Naive thymus-derived CD4-positive, alpha-beta T cell (primary cell): ENCODE measurements at regions of chr17 and their contacts with region 1.

Region 1: DNA sequence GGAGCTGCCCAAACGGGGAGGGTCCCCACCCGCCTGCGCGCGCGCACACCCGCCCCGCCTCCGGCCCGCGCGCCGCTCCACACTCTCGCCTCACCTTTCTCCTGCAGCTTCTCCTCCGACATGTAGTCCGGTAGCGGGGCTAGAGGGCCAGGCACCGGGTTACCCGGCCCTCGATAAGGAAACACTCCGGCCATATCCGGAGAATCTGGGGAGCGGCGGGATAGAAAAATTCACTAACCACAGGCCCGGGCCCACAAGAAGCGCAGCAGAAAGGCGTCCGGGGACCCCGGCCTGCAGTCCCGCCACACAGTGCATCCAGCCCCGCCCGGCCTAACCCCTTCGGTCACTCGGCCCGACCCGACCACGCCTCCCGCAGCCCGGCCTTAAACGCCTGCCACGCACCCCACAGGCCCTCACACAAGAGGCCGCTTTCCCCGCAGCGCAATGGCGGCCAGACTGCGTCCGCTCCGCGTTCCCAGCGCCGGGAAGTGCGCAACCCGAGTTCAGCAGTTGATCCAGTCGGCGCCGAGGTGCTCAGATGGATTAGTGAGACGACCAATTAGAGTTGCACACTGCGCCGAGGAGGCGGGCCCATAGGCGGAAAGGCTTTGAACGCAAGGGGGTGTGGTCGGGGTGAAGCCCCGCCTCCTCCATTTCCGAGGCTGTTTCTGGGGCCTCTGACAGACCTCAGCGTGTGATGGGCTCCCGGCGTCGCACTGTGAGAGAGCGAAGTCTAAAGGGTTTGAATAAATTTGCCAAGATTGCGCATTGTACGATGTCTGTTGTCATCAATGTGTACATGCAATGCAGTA is at the start of gene PRPF8:
- DNase-seq: peak; percentile 89 to 99 (median 99)
- ATAC-seq: peak; percentile 99
- H3K4me3 ChIP-seq: peak within 1 kb of the TSS; percentile 96
- H3K4me3 Mint-ChIP-seq: peak within 1 kb of the TSS; percentile 89 to 100 (median 97)
- H3K27ac ChIP-seq: peak within 1 kb of the TSS; percentile 100
- H3K27ac Mint-ChIP-seq: peak within 1 kb of the TSS; percentile 95 to 100 (median 98)
- H3K4me1 ChIP-seq: peaks cover 10 to 24% of the 10 kb centered on the region in 2 donors
- H3K4me1 Mint-ChIP-seq: peaks cover 32 to 59% (median 48%) of the 10 kb centered on the region in 7 donors
- H3K27me3 ChIP-seq: no peaks in the 10 kb centered on the region
- H3K27me3 Mint-ChIP-seq: no peaks in the 10 kb centered on the region
- total RNA-seq, gene PRPF8: 388 to 554 (median 460) TPM

Region 2: DNA sequence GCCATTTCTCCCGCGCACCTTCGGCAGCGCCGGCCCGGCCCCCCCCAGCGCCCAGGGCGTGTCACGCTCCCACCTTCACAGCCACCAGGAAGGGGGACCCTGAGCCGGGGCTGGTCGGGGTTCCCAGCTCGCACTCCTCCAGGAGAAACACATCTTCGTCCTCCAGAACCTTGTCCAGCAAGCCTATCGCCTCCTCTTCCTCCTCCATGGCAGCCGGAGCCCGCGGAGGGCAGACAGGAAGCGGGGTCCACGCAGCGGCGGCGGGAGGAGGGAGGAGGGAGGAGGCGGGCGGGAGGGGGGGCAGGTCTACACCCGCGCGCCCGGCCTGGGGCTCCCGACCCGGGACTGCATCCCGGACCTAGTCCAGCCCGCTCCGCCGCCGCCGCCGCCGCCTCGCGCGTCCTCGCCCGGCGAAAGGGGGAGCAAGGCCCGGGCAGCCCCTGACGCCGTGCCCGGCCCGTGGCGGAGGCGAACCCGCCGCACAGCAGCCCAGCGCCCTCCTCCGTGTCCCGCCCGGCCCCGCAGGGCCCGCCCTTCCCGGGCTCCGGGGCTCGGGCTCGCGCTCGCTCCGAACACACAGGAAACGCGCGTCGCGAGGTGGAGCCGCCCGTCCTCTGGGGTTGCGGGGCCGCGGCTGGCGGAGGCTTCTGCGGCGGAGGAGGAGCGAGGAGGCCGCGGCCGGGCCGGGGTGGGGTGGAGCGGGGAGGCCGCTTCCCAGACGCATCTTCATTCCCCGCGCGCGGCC is 575.6 kb before region 1 on chr17:
- CTCF ChIA-PET with region 1: no interaction called
- POLR2A ChIA-PET with region 1: no interaction called
- intact Hi-C with region 1: loop called in 1 of 2 experiments (anchors 5 kb)
- DNase-seq: peak; percentile 62 to 79 (median 76)
- ATAC-seq: peak; percentile 85
- H3K4me3 ChIP-seq: peak overlapping the region; percentile 71
- H3K4me3 Mint-ChIP-seq: peak overlapping the region; percentile 78 to 92 (median 86)
- H3K27ac ChIP-seq: peak overlapping the region; percentile 71
- H3K27ac Mint-ChIP-seq: peak overlapping the region in 8 of 9 donors; percentile 51 to 92 (median 86)
- H3K4me1 ChIP-seq: peaks cover 9 to 22% of the 10 kb centered on the region in 2 donors
- H3K4me1 Mint-ChIP-seq: peaks cover 16 to 47% (median 35%) of the 10 kb centered on the region in 7 donors
- H3K27me3 ChIP-seq: no peaks in the 10 kb centered on the region
- H3K27me3 Mint-ChIP-seq: no peaks in the 10 kb centered on the region

Region 3: DNA sequence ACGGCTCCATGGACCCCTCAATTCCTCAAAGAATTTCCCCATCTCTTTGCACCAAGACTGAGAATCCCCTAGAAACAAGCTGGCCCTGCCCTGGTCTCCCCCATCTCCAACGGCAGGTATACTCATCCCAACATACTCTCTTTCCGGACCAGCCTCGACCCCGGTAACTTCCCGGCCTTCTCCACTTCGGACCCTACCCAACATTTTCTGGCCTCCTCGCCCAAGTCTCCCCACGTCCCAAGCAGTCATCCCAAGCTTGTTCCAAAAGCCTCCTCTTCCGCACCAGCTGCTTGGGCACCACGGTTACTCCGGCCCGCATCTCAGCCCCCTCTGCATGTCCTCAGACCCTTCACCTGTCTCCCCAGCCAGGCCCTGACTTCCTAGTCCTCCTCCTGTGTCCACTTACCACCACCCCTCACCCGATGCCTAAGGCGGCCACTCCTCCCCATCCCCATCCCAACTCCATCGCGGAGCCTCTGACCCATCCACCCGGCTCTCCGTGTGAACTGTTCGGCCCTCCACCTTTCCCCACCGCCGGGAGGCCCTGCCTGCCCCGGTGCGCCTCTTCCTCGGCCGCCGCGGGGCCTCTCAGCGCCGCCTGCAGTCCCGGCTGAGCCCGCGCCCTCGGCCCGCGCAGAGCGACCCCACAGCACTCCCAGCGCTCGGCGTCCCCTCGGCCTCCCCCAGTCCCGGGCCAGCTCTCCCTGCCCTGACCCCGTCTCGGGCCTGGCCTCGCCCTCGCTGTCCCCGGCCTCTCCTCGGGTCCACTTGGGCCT is 123.0 kb before region 1 on chr17:
- CTCF ChIA-PET with region 1: no interaction called
- POLR2A ChIA-PET with region 1: interaction called, 4 read pairs
- intact Hi-C with region 1: loop called in 1 of 2 experiments (anchors 1 kb)
- DNase-seq: peak in 8 of 9 donors; percentile 28 to 58 (median 36)
- ATAC-seq: peak; percentile 37
- H3K4me3 ChIP-seq: peak overlapping the region; percentile 39
- H3K4me3 Mint-ChIP-seq: peak overlapping the region; percentile 73 to 89 (median 82)
- H3K27ac ChIP-seq: peak overlapping the region; percentile 76
- H3K27ac Mint-ChIP-seq: peak overlapping the region in 8 of 9 donors; percentile 54 to 90 (median 76)
- H3K4me1 ChIP-seq: peaks cover 9 to 12% of the 10 kb centered on the region in 2 donors
- H3K4me1 Mint-ChIP-seq: peaks cover 25 to 54% (median 43%) of the 10 kb centered on the region in 7 donors
- H3K27me3 ChIP-seq: no peaks in the 10 kb centered on the region
- H3K27me3 Mint-ChIP-seq: peaks cover 0 to 13% (median 0%) of the 10 kb centered on the region in 5 donors

Region 4: DNA sequence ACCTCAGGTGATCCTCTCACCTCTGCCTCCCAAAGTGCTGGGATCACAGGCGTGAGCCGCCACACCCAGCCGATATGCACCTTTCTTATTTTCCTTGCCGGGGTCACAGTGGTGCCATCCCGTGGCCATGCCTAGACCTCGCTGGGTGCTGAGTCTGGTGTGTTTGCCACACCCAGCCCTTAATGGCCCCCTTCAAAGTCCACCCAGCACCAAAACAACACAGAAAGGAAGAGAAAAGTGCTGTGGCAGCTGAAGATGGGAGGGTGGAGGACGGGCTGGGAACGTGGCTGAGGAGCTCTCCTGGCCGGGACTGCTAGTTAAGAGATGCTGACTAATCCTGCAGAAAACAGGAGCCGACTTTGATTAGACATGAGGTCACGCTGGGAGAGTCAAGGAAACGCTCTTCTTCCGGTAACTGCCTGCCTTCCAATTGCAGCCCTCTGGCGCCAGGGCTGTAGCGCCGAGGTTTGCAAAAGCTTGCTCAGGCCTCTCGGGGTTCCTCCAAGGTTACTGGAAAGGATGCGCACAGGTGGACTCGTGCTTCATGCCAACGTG is 66.9 kb before region 1 on chr17:
- CTCF ChIA-PET with region 1: no interaction called
- POLR2A ChIA-PET with region 1: no interaction called
- intact Hi-C with region 1: no loop called
- DNase-seq: no peak
- ATAC-seq: peak; percentile 52
- H3K4me3 ChIP-seq: no peak overlapping the region
- H3K4me3 Mint-ChIP-seq: no peak overlapping the region
- H3K27ac ChIP-seq: no peak overlapping the region
- H3K27ac Mint-ChIP-seq: no peak overlapping the region
- H3K4me1 ChIP-seq: no peaks in the 10 kb centered on the region
- H3K4me1 Mint-ChIP-seq: peaks cover 0 to 4% (median 3%) of the 10 kb centered on the region in 7 donors
- H3K27me3 ChIP-seq: no peaks in the 10 kb centered on the region
- H3K27me3 Mint-ChIP-seq: no peaks in the 10 kb centered on the region

Region 5: DNA sequence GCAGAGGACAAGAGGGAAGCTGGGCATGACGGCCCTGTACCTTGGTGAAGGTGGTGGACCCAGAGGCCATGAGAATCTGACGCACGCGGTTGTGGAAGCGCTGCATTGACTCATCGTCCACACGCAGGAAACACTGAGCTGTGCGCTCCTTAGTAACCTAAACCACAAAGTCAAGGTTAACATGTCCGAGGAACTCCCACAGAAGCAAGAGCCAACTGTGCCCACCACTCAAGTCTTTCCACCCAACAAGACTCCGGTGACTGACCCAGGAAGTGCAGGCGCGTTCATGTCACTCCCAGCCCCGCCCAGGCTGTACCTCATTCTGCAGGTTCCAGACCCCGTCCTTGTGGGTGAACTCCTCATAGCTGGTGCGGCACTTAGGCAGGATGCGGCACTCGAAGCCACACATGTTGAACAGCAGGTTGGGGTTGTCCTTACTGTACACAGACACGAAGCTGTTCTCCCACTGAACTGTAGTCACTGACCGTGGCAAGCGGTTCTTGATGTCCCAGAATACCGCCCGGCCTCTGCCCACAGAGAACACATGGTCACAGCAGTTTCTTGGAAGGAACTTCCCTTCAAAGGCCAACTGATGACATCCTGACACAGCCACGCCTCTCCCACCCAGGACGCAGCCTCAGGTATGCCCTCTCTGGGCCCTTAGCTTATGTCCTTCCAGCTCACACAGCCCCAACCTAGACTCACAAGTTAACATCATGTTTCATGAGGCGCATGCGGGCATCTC is 11.4 kb before region 1 on chr17:
- CTCF ChIA-PET with region 1: interaction called, 7 read pairs
- POLR2A ChIA-PET with region 1: interaction called, 9 read pairs
- intact Hi-C with region 1: loop called in 1 of 2 experiments (anchors 2 kb)
- DNase-seq: peak in 1 of 9 donors; percentile 7
- ATAC-seq: peak; percentile 26
- H3K4me3 ChIP-seq: no peak overlapping the region
- H3K4me3 Mint-ChIP-seq: no peak overlapping the region
- H3K27ac ChIP-seq: no peak overlapping the region
- H3K27ac Mint-ChIP-seq: peak overlapping the region in 5 of 9 donors; percentile 6 to 60 (median 43)
- H3K4me1 ChIP-seq: no peaks in the 10 kb centered on the region
- H3K4me1 Mint-ChIP-seq: peaks cover 19 to 45% (median 34%) of the 10 kb centered on the region in 7 donors
- H3K27me3 ChIP-seq: no peaks in the 10 kb centered on the region
- H3K27me3 Mint-ChIP-seq: no peaks in the 10 kb centered on the region

Region 6: GRCh38 chr17:1796800-1797199 is 112.2 kb after region 1 on chr17:
- CTCF ChIA-PET with region 1: no interaction called
- POLR2A ChIA-PET with region 1: no interaction called
- intact Hi-C with region 1: no loop called
- DNase-seq: no peak
- ATAC-seq: no peak
- H3K4me3 ChIP-seq: no peak overlapping the region
- H3K4me3 Mint-ChIP-seq: no peak overlapping the region
- H3K27ac ChIP-seq: no peak overlapping the region
- H3K27ac Mint-ChIP-seq: peak overlapping the region in 4 of 9 donors; percentile 2 to 32 (median 12)
- H3K4me1 ChIP-seq: no peaks in the 10 kb centered on the region
- H3K4me1 Mint-ChIP-seq: peaks cover 10 to 21% (median 14%) of the 10 kb centered on the region in 7 donors
- H3K27me3 ChIP-seq: no peaks in the 10 kb centered on the region
- H3K27me3 Mint-ChIP-seq: no peaks in the 10 kb centered on the region

Region 7: GRCh38 chr17:2303204-2304188 is 618.9 kb after region 1 on chr17 and contains the starts of genes SMG6 and SRR:
- CTCF ChIA-PET with region 1: no interaction called
- POLR2A ChIA-PET with region 1: no interaction called
- intact Hi-C with region 1: loop called in 1 of 2 experiments (anchors 1 kb)
- DNase-seq: peak; percentile 87 to 95 (median 93)
- ATAC-seq: peak; percentile 97
- H3K4me3 ChIP-seq: peak within 1 kb of the TSS; percentile 87
- H3K4me3 Mint-ChIP-seq: peak within 1 kb of the TSS; percentile 90 to 98 (median 92)
- H3K27ac ChIP-seq: peak within 1 kb of the TSS; percentile 98
- H3K27ac Mint-ChIP-seq: peak within 1 kb of the TSS; percentile 76 to 95 (median 84)
- H3K4me1 ChIP-seq: peaks cover 9 to 13% of the 10 kb centered on the region in 2 donors
- H3K4me1 Mint-ChIP-seq: peaks cover 25 to 61% (median 47%) of the 10 kb centered on the region in 7 donors
- H3K27me3 ChIP-seq: no peaks in the 10 kb centered on the region
- H3K27me3 Mint-ChIP-seq: no peaks in the 10 kb centered on the region
- total RNA-seq, gene SMG6: 45.6 to 65.3 (median 55.8) TPM
- total RNA-seq, gene SRR: 3.1 to 16.0 (median 8.3) TPM